ENCODE measurements at regions of chr5 and their contacts with region 1.

Region 1: GRCh38 chr5:32092938-32093812 is 80.9 kb downstream of the GOLPH3 start:
- DNase-seq: peak; percentile 80 to 89 (median 82)
- ATAC-seq: peak; percentile 95
- H3K4me3 ChIP-seq: no peak overlapping the region
- H3K27ac ChIP-seq: no peak overlapping the region
- H3K4me1 ChIP-seq: peaks cover 0 to 12% of the 10 kb centered on the region in 2 experiments; a peak in 2 of 5 replicates
- H3K27me3 ChIP-seq: peaks cover 12 to 26% of the 10 kb centered on the region in 2 experiments; a peak in 4 of 5 replicates
- CTCF ChIP-seq: peak; percentile 87 to 92 (median 90)
- EP300 ChIP-seq: no peak
- POLR2A ChIP-seq: no peak
- RAD21 ChIP-seq: peak; percentile 44 to 85

Region 2: DNA sequence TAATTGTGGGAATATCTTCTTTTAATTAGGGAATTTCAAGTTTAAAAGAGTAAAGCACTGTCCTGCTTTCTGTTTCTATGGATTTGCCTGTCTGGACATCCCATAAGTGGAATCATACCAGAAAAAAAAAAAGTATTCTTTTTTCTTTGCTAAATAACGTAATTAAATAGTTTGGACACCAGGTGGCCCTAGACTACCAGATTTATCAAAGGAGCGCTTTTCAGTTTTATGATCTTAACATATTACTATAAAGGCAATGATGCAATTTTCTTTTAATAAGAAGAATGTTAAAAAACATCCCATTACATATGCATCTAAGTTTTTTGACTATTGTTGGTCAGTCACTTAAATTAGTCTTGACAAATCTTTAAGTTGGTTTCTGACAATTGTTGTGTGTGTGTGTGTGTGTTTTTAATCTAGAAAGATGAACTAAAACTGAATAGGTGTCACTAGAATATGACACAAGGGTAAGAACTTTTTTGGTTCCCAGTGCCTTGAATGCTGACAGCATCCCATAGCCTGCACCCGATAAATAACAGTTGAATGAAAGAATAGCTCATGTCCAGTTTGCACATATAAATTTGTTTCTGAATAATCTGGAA is 511.6 kb before region 1 on chr5:
- CTCF ChIA-PET with region 1: interaction called, 19 read pairs
- POLR2A ChIA-PET with region 1: no interaction called
- in situ Hi-C with region 1: loop called (anchors 10 kb)
- intact Hi-C with region 1: loop called (anchors 1 kb)
- DNase-seq: peak in 3 of 4 experiments; percentile 31 to 52 (median 33)
- ATAC-seq: peak; percentile 51; the same call in 1 of the 3 replicates
- H3K4me3 ChIP-seq: no peak overlapping the region
- H3K27ac ChIP-seq: no peak overlapping the region
- H3K4me1 ChIP-seq: no peaks in the 10 kb centered on the region
- H3K27me3 ChIP-seq: peaks cover 0 to 5% of the 10 kb centered on the region in 2 experiments; a peak in 2 of 5 replicates
- CTCF ChIP-seq: peak; percentile 20 to 79 (median 51); a peak in 3 of 6 replicates
- EP300 ChIP-seq: no peak
- POLR2A ChIP-seq: no peak
- RAD21 ChIP-seq: peak; percentile 83 to 87

Region 3: DNA sequence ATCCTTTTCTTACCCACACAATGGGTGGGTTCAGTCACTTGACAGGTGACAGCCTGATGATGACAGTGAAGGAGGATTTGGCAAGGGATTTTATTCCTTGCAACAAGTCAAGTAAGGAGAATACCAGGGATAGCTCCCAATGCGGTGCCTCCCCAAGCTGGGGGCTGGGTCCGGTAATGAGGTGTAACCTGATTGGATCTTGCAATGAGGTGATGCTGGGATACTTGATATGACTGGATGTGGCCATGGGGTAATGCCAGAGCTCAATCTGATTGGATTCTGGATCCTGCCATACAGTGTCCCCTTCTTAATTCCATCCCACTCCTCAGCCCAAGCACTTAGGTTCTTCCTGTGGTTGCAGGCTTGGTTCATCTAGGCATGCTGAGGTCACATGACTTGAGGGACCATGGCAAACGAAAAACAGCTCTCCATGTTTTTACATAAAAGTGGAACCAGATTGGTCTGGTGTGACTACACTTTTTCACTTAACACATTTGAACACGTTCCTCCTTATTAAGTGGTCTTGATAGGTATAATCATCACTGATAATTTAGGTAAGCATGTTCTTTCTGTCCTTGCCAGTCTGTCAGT is 273.2 kb before region 1 on chr5:
- CTCF ChIA-PET with region 1: interaction called, 4 read pairs
- POLR2A ChIA-PET with region 1: no interaction called
- in situ Hi-C with region 1: loop called (anchors 5 kb)
- intact Hi-C with region 1: loop called (anchors 1 kb)
- DNase-seq: no peak
- ATAC-seq: no peak
- H3K4me3 ChIP-seq: no peak overlapping the region
- H3K27ac ChIP-seq: no peak overlapping the region
- H3K4me1 ChIP-seq: no peaks in the 10 kb centered on the region
- H3K27me3 ChIP-seq: peaks cover 0 to 4% of the 10 kb centered on the region in 2 experiments; a peak in 1 of 5 replicates
- CTCF ChIP-seq: no peak
- EP300 ChIP-seq: no peak
- POLR2A ChIP-seq: no peak
- RAD21 ChIP-seq: no peak

Region 4: GRCh38 chr5:31825518-31826068 is 267.6 kb before region 1 on chr5:
- CTCF ChIA-PET with region 1: interaction called, 4 read pairs
- POLR2A ChIA-PET with region 1: no interaction called
- in situ Hi-C with region 1: no loop called
- intact Hi-C with region 1: loop called (anchors 1 kb)
- DNase-seq: peak in 3 of 4 experiments; percentile 22 to 63 (median 30)
- ATAC-seq: peak; percentile 94
- H3K4me3 ChIP-seq: no peak overlapping the region
- H3K27ac ChIP-seq: no peak overlapping the region
- H3K4me1 ChIP-seq: no peaks in the 10 kb centered on the region
- H3K27me3 ChIP-seq: no peaks in the 10 kb centered on the region; a peak in 1 of 5 replicates
- CTCF ChIP-seq: peak; percentile 51 to 81 (median 68); a peak in 5 of 6 replicates
- EP300 ChIP-seq: no peak
- POLR2A ChIP-seq: no peak
- RAD21 ChIP-seq: peak; percentile 32 to 78; a peak in 3 of 4 replicates

Region 5: GRCh38 chr5:31839005-31839404 is 254.2 kb before region 1 on chr5:
- CTCF ChIA-PET with region 1: no interaction called
- POLR2A ChIA-PET with region 1: no interaction called
- in situ Hi-C with region 1: loop called (anchors 5 kb)
- intact Hi-C with region 1: no loop called
- DNase-seq: no peak
- ATAC-seq: no peak
- H3K4me3 ChIP-seq: no peak overlapping the region
- H3K27ac ChIP-seq: no peak overlapping the region
- H3K4me1 ChIP-seq: no peaks in the 10 kb centered on the region
- H3K27me3 ChIP-seq: peaks cover 3 to 4% of the 10 kb centered on the region in 2 experiments; a peak in 2 of 5 replicates
- CTCF ChIP-seq: no peak
- EP300 ChIP-seq: no peak
- POLR2A ChIP-seq: no peak
- RAD21 ChIP-seq: no peak

Region 6: GRCh38 chr5:31934156-31934555 is 159.0 kb before region 1 on chr5:
- CTCF ChIA-PET with region 1: interaction called, 4 read pairs
- POLR2A ChIA-PET with region 1: no interaction called
- in situ Hi-C with region 1: no loop called
- intact Hi-C with region 1: loop called (anchors 1 kb)
- DNase-seq: no peak
- ATAC-seq: no peak
- H3K4me3 ChIP-seq: no peak overlapping the region
- H3K27ac ChIP-seq: no peak overlapping the region
- H3K4me1 ChIP-seq: no peaks in the 10 kb centered on the region
- H3K27me3 ChIP-seq: peaks cover 13 to 42% of the 10 kb centered on the region in 2 experiments; a peak in 3 of 5 replicates
- CTCF ChIP-seq: no peak
- EP300 ChIP-seq: no peak
- POLR2A ChIP-seq: no peak
- RAD21 ChIP-seq: no peak

Region 7: GRCh38 chr5:32329308-32329834 is 236.2 kb after region 1 on chr5:
- CTCF ChIA-PET with region 1: no interaction called
- POLR2A ChIA-PET with region 1: interaction called, 3 read pairs
- in situ Hi-C with region 1: no loop called
- intact Hi-C with region 1: loop called (anchors 5 kb)
- DNase-seq: peak; percentile 71 to 87 (median 78)
- ATAC-seq: peak; percentile 98
- H3K4me3 ChIP-seq: no peak overlapping the region
- H3K27ac ChIP-seq: no peak overlapping the region
- H3K4me1 ChIP-seq: peaks cover 0 to 3% of the 10 kb centered on the region in 2 experiments; a peak in 1 of 5 replicates
- H3K27me3 ChIP-seq: no peaks in the 10 kb centered on the region
- CTCF ChIP-seq: peak; percentile 87 to 95 (median 94)
- EP300 ChIP-seq: no peak
- POLR2A ChIP-seq: no peak
- RAD21 ChIP-seq: peak; percentile 90 to 94

Measured in K562 (cell line).